Cardiac septum (tissue), 1 donor: ENCODE measurements at regions of chr3 and their contacts with region 1.

Region 1: DNA sequence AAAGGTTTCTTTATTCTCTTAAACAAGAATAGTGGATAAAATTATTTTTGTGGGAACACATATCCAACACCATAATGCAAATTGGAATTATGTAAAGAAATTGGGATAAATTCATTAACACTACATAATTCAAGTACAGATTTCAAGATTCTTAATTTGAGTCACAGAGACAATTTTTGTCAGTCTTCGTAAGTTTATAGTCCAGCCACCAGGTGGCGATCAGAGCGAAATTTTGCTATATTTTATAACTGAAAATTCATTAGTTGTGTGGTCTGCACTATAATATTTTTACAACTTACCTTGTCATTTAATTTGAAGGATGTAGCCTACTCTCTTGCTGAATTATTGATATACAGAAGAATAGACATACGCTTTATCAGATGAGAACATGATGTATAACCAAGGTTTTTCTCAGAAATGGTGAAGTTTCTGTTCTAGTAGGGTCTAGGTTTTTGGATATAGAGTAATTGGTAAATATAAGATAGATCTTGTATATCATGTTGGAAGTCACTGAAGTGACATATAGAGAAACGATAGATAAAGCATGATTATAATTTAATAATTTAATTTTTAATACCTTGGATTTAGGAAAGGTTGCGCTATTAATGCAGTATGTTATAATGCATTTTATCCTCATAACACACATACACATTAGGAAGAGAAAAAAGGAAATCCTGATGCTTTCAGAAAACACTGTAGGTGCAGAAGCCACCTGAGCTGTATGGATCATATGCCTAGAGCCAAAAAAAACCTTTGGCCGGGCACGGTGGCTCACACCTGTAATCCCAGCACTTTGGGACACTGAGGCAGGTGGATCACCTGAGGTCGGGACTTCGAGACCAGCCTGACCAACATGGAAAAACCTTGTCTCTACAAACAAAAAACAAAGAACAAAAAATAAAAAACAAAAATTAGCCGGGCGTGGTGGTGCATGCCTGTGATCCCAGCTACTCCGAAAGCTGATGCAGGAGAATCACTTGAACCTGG is 31.7 kb downstream of the PLSCR4 start:
- DNase-seq: no peak

Region 2: DNA sequence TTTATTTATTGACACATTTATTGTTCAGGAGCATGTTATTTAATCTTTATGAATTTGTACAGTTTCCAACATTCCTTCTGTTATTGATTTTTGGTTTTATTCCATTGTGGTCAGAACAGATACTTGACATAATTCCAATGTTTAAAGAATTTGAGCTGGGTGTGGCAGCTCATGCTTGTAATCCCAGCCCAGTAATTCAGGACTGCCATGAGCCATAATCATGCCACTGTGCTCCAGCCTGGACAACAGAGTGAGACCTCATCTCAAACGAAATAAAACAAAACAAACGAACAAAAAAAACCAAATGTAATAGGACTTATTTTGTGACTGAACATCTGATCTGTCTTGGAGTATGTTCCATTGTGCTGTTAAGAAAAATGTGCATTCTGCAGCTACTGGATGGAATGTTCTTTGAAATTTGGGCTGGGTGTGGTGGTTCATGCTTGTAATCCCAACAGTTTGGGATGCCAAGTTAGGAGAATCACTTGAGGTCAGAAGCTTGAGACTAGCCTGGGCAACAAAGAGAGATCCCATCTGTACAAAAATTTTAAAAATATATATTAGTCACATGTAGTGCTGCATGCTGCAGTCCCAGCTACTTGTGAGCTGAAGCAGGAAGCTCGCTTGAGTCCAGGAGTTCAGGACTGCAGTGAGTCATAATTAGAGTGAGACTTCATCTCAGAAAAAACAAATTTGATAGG is 94.4 kb after region 1 on chr3:
- intact Hi-C with region 1: loop called (anchors 5 kb)
- DNase-seq: no peak

Region 3: DNA sequence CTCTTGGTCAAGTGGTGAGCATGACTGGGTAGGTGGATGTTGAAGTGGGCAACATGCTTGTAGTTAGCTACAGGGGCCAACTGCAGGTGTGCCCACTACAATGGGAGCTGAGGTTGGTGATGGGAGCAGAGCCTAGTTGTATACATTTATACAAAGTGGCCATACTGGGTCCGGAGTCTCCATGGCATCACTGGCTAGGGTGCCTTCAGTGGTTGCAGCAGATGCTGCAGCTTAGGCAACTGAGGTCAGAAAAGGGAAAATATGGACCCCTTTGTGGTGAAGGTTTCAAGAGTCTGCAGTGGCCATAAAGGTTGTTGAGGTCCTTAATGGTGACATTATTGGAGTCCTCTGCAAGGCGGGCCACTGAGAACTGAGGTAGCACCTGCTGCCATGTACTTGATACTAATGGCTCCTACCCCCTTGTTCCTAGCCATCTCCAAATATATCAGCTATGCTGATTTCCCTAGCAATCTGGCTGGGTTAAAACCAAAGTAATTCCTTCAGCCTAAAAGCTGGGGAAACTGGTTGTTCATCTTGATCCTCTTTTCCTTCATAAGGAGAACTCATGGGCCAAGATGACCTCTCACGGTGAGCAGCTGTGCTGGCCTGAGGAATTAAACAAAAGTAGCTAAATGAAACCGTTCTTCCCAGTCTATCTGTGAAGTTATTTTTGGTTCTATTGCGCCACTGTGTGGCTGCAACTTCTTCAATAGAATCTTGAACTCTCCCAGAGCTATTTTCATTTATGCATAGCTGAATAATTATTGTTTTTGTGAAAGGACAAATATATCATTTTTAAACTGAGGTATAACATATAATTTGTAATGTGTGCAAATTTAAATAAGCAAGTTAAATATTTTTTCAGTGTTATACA is 107.7 kb after region 1 on chr3:
- intact Hi-C with region 1: loop called (anchors 2 kb)
- DNase-seq: no peak

Region 4: DNA sequence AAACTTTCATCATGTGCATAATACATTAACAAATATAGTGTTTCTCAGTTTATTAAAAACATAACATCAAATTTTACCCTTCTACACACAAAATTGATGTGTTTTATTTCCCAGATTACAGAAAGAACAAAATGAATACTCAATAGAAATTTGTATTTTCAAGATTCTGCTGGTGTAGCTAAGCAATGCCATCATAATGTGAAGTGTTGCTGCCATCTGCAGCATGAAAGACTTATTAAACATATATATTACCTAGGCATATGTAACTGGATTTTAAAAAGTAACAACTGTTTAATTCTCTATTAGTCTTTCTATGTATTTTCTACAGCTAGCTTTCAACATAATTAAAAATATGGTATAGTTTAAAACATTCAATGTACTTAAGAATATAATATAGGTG is 358.5 kb after region 1 on chr3:
- intact Hi-C with region 1: loop called (anchors 5 kb)
- DNase-seq: no peak